Activated CD8-positive, alpha-beta T cell treated with anti-CD3 and anti-CD28 coated beads for 36 hours (primary cell): ENCODE measurements at regions of chr12 and their contacts with region 1.

Region 1: DNA sequence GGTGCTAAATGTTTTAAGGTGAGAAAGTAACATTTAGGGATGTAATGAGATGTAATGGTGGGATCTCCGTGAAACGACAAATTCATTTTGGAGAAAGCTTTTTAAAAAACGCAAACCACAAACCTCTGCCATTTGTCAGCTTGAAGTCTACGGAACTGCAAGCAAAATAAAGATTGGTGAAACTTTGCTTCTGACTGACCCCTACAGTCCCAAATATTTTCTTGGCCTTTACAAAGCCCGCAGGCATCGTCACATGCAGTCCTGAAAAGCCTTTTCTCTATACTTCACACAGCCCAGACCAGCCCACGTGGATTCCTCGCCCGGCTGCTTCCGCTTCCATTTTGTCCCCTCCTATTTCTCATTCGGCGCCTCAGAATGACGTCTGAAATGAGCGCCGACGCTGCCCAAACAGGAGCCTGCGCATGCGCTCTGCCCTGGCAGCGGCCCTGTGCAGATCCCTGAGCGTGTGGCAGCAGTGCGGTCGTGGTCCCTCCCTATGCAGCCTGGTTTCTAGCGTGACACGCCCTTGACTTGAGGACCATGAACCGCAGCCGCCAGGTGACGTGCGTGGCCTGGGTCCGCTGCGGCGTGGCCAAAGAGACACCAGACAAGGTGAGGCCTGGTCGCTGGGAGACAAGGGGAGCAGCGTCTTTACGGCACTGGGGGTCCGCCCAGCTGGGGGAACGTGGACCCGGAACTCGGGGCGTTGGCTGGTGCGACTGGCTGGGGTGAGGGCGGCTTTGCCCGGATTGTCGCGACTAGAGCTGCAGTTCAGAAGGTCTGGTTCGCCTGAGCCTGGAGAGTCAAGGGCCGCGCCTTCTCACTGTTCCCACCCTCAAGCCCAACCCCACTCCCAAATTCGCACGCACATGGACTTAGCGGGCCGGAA is at the start of gene PWP1:
- DNase-seq: peak; percentile 96
- ATAC-seq: peak; percentile 91
- H3K4me3 Mint-ChIP-seq: peak within 1 kb of the TSS; percentile 91
- H3K27ac Mint-ChIP-seq: peak within 1 kb of the TSS; percentile 97
- H3K4me1 Mint-ChIP-seq: peaks cover 19% of the 10 kb centered on the region
- H3K27me3 Mint-ChIP-seq: no peaks in the 10 kb centered on the region
- CTCF ChIP-seq: no peak
- total RNA-seq, gene PWP1: 52.4 to 57.5 TPM

Region 2: GRCh38 chr12:107670999-107671643 is 14.5 kb before region 1 on chr12:
- CTCF ChIA-PET with region 1: interaction called, 40 read pairs
- POLR2A ChIA-PET with region 1: interaction called, 4 read pairs
- intact Hi-C with region 1: no loop called
- DNase-seq: peak; percentile 65
- ATAC-seq: peak; percentile 70
- H3K4me3 Mint-ChIP-seq: no peak overlapping the region
- H3K27ac Mint-ChIP-seq: no peak overlapping the region
- H3K4me1 Mint-ChIP-seq: peaks cover 2% of the 10 kb centered on the region
- H3K27me3 Mint-ChIP-seq: peaks cover 6% of the 10 kb centered on the region
- CTCF ChIP-seq: peak; percentile 78

Region 3: DNA sequence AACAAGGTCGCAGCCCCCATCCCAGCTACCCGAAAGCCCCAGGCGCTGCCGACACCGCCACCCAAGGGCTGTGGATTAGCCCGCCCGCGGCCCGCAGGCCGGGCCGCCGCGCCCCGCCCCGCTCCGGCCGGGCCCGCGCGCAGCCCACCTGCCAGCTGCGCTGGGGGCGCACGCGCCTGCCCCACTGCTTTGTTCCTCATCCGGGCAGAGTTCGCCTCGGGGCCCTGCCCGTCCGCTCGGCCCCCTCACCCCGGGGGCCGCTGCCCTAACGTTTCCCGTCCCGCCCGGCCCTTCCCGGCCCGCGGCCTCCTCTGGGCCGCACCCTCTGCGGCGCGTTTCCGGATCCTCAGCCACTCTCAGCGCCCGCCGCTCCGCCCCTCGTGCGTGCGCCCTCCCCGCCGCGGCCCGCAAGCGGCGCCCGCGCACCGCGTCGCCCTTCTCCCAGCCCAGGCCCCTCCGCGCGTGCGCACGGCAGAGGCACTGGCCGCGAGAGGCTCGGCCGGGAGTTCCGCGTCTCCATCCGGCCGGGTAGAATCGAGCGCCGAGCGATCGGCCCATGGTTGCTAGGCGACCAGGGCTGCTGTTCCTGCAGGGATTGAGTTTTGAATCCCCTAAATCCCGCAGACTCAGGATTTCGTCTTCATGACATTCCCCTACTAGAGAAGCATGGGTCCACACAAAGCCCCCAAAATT is 75.4 kb after region 1 on chr12 and contains the start of gene PRDM4:
- CTCF ChIA-PET with region 1: interaction called, 4 read pairs
- POLR2A ChIA-PET with region 1: interaction called, 13 read pairs
- intact Hi-C with region 1: no loop called
- DNase-seq: peak; percentile 89
- ATAC-seq: peak; percentile 95
- H3K4me3 Mint-ChIP-seq: peak within 1 kb of the TSS; percentile 92
- H3K27ac Mint-ChIP-seq: peak within 1 kb of the TSS; percentile 89
- H3K4me1 Mint-ChIP-seq: peaks cover 25% of the 10 kb centered on the region
- H3K27me3 Mint-ChIP-seq: no peaks in the 10 kb centered on the region
- CTCF ChIP-seq: no peak
- total RNA-seq, gene PRDM4: 19.3 to 21.7 TPM